CD4-positive, alpha-beta T cell (primary cell): ENCODE measurements at regions of chr10 and their contacts with region 1.

Region 1: GRCh38 chr10:43348511-43349312 is 22.7 kb upstream of the FXYD4 start:
- DNase-seq: peak; percentile 77 to 94 (median 85)
- ATAC-seq: peak; percentile 100
- H3K4me3 ChIP-seq: no peak overlapping the region
- H3K4me3 Mint-ChIP-seq: no peak overlapping the region
- H3K27ac ChIP-seq: no peak overlapping the region
- H3K27ac Mint-ChIP-seq: no peak overlapping the region
- H3K4me1 ChIP-seq: peaks cover 35% of the 10 kb centered on the region
- H3K4me1 Mint-ChIP-seq: peaks cover 10% of the 10 kb centered on the region
- H3K27me3 ChIP-seq: peaks cover 9 to 13% of the 10 kb centered on the region in 2 experiments
- H3K27me3 Mint-ChIP-seq: peaks cover 18% of the 10 kb centered on the region
- CTCF ChIP-seq: peak; percentile 90

Region 2: GRCh38 chr10:43204943-43205671 is 143.6 kb before region 1 on chr10:
- CTCF ChIA-PET with region 1: interaction called, 4 read pairs
- POLR2A ChIA-PET with region 1: no interaction called
- intact Hi-C with region 1: loop called (anchors 1 to 5 kb)
- DNase-seq: peak; percentile 25 to 76 (median 41)
- ATAC-seq: peak; percentile 63
- H3K4me3 ChIP-seq: no peak overlapping the region
- H3K4me3 Mint-ChIP-seq: no peak overlapping the region
- H3K27ac ChIP-seq: no peak overlapping the region
- H3K27ac Mint-ChIP-seq: peak overlapping the region; percentile 24
- H3K4me1 ChIP-seq: peaks cover 22% of the 10 kb centered on the region
- H3K4me1 Mint-ChIP-seq: peaks cover 6% of the 10 kb centered on the region
- H3K27me3 ChIP-seq: no peaks in the 10 kb centered on the region
- H3K27me3 Mint-ChIP-seq: no peaks in the 10 kb centered on the region
- CTCF ChIP-seq: peak; percentile 70

Region 3: DNA sequence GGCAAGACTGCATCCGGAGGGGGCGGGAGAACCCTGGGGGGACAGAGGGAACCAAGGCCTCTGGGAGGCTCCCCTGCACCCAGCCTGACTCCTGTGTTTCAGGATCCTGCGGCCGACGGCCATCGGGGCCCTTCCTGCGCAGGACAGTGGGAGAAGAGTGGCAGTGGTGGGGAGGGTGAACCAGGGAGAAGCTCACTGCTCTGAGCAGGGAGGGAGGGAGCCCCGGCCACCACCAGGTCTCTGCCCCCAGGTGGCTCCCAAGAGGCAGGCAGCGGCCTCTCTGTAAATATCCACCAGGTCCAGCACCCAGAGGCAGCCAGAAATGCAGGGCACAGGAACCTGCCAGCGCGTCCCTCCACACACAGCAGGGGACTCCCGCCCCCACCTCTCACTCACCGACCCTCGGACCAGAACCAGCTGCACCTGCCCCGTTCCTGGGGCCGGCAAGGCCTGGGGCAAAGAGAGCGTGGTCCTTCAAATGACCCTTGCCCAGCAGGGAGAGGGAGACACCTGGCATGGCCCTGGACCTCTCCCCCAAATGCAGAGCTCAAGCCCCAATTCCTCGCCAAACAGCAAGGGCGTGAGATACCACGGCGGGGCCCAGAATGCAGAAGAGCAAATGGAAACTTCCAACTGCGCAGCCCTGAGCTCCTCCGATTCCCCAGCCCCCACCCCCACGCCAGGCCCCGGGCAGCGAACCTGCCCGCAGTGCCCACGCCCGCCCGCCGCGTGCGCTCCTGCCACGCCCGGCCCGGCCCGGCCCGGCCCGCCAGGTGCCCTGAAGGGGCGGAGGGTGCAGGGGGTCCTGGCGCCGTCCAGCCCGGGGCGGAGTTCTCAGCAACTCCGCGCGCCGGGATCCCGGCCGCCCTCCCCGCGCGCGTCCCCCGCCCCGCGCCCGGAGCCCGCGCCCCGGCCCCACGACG is 82.7 kb before region 1 on chr10:
- CTCF ChIA-PET with region 1: interaction called, 14 read pairs
- POLR2A ChIA-PET with region 1: interaction called, 6 read pairs
- intact Hi-C with region 1: loop called (anchors 1 kb)
- DNase-seq: peak; percentile 28 to 71 (median 44)
- ATAC-seq: peak; percentile 81
- H3K4me3 ChIP-seq: peak overlapping the region; percentile 53
- H3K4me3 Mint-ChIP-seq: peak overlapping the region; percentile 89
- H3K27ac ChIP-seq: no peak overlapping the region
- H3K27ac Mint-ChIP-seq: peak overlapping the region; percentile 47
- H3K4me1 ChIP-seq: peaks cover 19% of the 10 kb centered on the region
- H3K4me1 Mint-ChIP-seq: peaks cover 5% of the 10 kb centered on the region
- H3K27me3 ChIP-seq: peaks cover 22 to 42% of the 10 kb centered on the region in 2 experiments
- H3K27me3 Mint-ChIP-seq: peaks cover 58% of the 10 kb centered on the region
- CTCF ChIP-seq: no peak

Region 4: GRCh38 chr10:43292755-43293676 is 55.7 kb before region 1 on chr10:
- CTCF ChIA-PET with region 1: interaction called, 42 read pairs
- POLR2A ChIA-PET with region 1: interaction called, 15 read pairs
- intact Hi-C with region 1: loop called (anchors 1 kb)
- DNase-seq: peak in 12 of 14 experiments; percentile 25 to 75 (median 43)
- ATAC-seq: peak; percentile 63
- H3K4me3 ChIP-seq: no peak overlapping the region
- H3K4me3 Mint-ChIP-seq: no peak overlapping the region
- H3K27ac ChIP-seq: peak overlapping the region in 1 of 2 donors; percentile 73
- H3K27ac Mint-ChIP-seq: peak overlapping the region; percentile 50
- H3K4me1 ChIP-seq: peaks cover 50% of the 10 kb centered on the region
- H3K4me1 Mint-ChIP-seq: peaks cover 59% of the 10 kb centered on the region
- H3K27me3 ChIP-seq: no peaks in the 10 kb centered on the region
- H3K27me3 Mint-ChIP-seq: peaks cover 12% of the 10 kb centered on the region
- CTCF ChIP-seq: peak; percentile 72

Region 5: DNA sequence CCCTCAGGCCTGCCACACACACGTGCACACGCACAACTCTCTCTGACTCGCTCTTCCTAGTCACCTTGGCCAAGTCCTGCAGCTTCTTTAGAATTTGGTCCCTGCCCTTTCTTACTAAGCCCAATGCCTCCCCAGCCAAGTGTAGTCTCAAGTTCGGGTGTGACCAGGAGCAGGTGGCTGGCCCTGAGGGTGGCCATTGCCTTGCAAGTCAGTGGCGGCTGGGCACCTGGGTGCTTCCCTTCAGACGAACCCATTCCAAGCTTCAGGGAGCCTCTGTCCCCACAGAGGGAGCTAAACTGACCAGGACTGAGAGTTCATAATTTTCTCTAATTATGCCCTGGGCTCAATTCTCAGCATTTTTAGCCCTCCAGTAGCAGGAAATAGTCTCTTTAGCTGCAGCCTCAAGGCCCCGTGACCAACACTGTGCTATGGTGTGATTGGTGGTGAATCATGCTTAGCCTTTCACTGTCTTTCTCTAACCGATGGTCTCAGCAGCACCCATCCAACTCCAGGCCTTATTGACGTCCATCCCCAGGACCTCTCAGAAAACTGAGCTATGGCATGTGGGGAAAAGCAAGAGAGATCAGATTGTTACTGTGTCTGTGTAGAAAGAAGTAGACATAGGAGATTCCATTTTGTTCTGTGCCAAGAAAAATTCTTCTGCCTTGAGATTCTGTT is 11.9 kb before region 1 on chr10:
- CTCF ChIA-PET with region 1: interaction called, 4 read pairs
- POLR2A ChIA-PET with region 1: interaction called, 3 read pairs
- intact Hi-C with region 1: loop called in 1 of 2 experiments (anchors 2 kb)
- DNase-seq: no peak
- ATAC-seq: no peak
- H3K4me3 ChIP-seq: no peak overlapping the region
- H3K4me3 Mint-ChIP-seq: no peak overlapping the region
- H3K27ac ChIP-seq: no peak overlapping the region
- H3K27ac Mint-ChIP-seq: no peak overlapping the region
- H3K4me1 ChIP-seq: peaks cover 24% of the 10 kb centered on the region
- H3K4me1 Mint-ChIP-seq: peaks cover 20% of the 10 kb centered on the region
- H3K27me3 ChIP-seq: peaks cover 0 to 5% of the 10 kb centered on the region in 2 experiments
- H3K27me3 Mint-ChIP-seq: peaks cover 8% of the 10 kb centered on the region
- CTCF ChIP-seq: no peak